ENCODE measurements at regions of chr15 and their contacts with region 1.

Region 1: GRCh38 chr15:92146511-92147150 is 247.1 kb upstream of the ST8SIA2 start:
- DNase-seq: no peak
- H3K4me3 ChIP-seq: no peak overlapping the region
- H3K27ac ChIP-seq: no peak overlapping the region
- H3K4me1 ChIP-seq: peaks cover 0 to 11% (median 1%) of the 10 kb centered on the region in 4 experiments; a peak in 4 of 7 replicates
- H3K27me3 ChIP-seq: no peaks in the 10 kb centered on the region
- CTCF ChIP-seq: no peak
- EP300 ChIP-seq: no peak
- POLR2A ChIP-seq: no peak
- RAD21 ChIP-seq: no peak

Region 2: DNA sequence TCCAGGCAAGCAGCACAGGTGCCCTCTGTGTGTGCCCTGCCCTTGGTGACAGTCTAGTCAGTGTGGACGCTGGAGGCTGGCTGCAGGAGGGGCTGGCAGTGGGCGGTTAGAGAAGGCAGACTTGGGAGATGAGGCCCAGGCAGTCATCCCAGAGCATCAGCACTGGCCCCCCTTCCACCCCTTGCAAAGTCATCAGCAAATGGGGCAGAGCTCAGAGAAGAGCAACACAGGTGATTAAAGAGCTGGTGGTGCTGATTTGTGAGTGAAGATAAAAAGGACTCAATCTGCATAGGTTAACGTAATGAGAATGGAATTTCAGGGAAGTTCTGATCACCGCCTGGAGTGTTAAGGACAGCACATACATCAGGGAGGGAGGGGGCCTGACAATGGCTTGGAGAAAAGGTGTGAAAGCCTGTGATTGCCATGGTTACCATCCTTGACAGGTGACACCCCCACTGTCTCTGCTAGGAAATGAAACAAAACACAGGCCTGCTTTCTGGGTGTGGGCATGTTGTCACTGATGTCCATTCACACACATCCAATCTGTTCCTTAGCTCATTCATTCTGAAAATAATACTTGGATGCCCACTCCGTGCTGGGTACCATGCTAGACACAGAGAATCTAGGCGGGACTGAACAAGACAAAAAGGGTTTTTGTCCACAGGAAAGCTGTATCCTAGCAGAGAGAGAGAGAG is 22.5 kb before region 1 on chr15:
- CTCF ChIA-PET with region 1: interaction called, 11 read pairs
- POLR2A ChIA-PET with region 1: interaction called, 3 read pairs
- DNase-seq: peak in 1 of 2 experiments; percentile 56
- H3K4me3 ChIP-seq: no peak overlapping the region
- H3K27ac ChIP-seq: no peak overlapping the region
- H3K4me1 ChIP-seq: peaks cover 6 to 17% (median 11%) of the 10 kb centered on the region in 4 experiments
- H3K27me3 ChIP-seq: no peaks in the 10 kb centered on the region
- CTCF ChIP-seq: no peak
- EP300 ChIP-seq: peak in 1 of 2 experiments; percentile 15; a peak in 1 of 3 replicates
- POLR2A ChIP-seq: no peak
- RAD21 ChIP-seq: no peak